ENCODE measurements at regions of chr15 and their contacts with region 1.

Region 1: GRCh38 chr15:44426975-44427755 is at the start of gene CTDSPL2:
- DNase-seq: peak; percentile 87
- ATAC-seq: peak; percentile 97
- H3K4me3 Mint-ChIP-seq: peak within 1 kb of the TSS; percentile 100
- H3K27ac Mint-ChIP-seq: peak within 1 kb of the TSS; percentile 99
- H3K4me1 Mint-ChIP-seq: peaks cover 41% of the 10 kb centered on the region
- H3K27me3 Mint-ChIP-seq: no peaks in the 10 kb centered on the region
- CTCF ChIP-seq: no peak
- total RNA-seq, gene CTDSPL2: 44.6 and 46.8 TPM in 2 replicates

Region 2: DNA sequence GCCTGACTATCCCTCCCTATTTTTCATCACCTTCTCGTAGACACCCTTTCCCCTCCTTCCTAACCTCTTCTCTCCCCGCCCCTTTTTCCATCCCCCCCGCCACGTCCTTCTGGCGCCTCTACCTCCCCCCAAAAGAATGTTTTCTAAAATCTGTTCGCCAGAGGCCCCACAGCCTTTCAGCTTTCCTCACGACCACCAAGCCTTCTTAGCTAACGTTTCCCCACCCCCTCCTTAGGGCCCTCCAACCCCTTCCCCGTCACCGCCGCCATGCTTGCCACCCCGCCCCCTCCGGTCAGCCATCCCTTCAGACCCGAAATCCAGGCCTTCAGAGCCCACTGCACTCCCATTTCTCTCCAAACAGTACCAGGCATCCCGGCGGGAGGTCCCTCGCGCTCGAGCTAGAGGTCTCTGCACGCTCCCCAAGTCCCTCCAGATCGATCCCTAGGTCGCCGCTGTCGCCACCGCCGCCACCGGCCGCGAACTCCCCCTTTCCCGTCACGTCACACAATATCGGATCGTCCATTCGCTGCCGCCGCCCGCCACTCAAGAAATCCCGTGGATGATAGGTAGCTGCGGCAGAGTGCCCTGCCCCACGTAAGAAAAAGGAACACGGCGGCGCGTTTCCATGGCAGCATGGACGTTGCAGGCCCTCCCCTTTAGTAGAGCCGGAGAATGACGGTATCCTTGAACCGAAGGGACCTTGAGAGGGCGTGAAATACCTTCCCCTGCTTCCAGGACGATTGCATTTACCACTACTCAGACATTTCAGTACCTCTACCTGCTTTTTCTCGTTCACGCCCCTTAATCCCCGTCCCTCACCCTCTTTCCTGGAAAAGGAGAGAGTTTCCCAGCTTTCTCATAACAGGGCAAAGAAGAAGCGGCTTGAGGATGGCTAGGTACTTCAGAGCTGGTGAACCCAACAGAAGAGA is 934.2 kb before region 1 on chr15 and contains the start of gene TP53BP1:
- CTCF ChIA-PET with region 1: no interaction called
- POLR2A ChIA-PET with region 1: no interaction called
- intact Hi-C with region 1: loop called (anchors 5 kb)
- DNase-seq: peak; percentile 87
- ATAC-seq: peak; percentile 99
- H3K4me3 Mint-ChIP-seq: peak within 1 kb of the TSS; percentile 98
- H3K27ac Mint-ChIP-seq: peak within 1 kb of the TSS; percentile 95
- H3K4me1 Mint-ChIP-seq: peaks cover 19% of the 10 kb centered on the region
- H3K27me3 Mint-ChIP-seq: no peaks in the 10 kb centered on the region
- CTCF ChIP-seq: no peak
- total RNA-seq, gene TP53BP1: 53.9 and 54.6 TPM in 2 replicates

Region 3: GRCh38 chr15:44286814-44287452 is 140.2 kb before region 1 on chr15:
- CTCF ChIA-PET with region 1: interaction called, 3 read pairs
- POLR2A ChIA-PET with region 1: interaction called, 32 read pairs
- intact Hi-C with region 1: loop called (anchors 1 kb)
- DNase-seq: no peak
- ATAC-seq: no peak
- H3K4me3 Mint-ChIP-seq: peak overlapping the region; percentile 90
- H3K27ac Mint-ChIP-seq: peak overlapping the region; percentile 99
- H3K4me1 Mint-ChIP-seq: peaks cover 42% of the 10 kb centered on the region
- H3K27me3 Mint-ChIP-seq: peaks cover 3% of the 10 kb centered on the region
- CTCF ChIP-seq: no peak

Region 4: GRCh38 chr15:44296625-44297524 is 130.3 kb before region 1 on chr15:
- CTCF ChIA-PET with region 1: no interaction called
- POLR2A ChIA-PET with region 1: no interaction called
- intact Hi-C with region 1: loop called (anchors 2 kb)
- DNase-seq: no peak
- ATAC-seq: peak; percentile 61
- H3K4me3 Mint-ChIP-seq: no peak overlapping the region
- H3K27ac Mint-ChIP-seq: peak overlapping the region; percentile 77
- H3K4me1 Mint-ChIP-seq: peaks cover 58% of the 10 kb centered on the region
- H3K27me3 Mint-ChIP-seq: no peaks in the 10 kb centered on the region
- CTCF ChIP-seq: no peak

Region 5: GRCh38 chr15:44468713-44469385 is 41.7 kb after region 1 on chr15:
- CTCF ChIA-PET with region 1: no interaction called
- POLR2A ChIA-PET with region 1: no interaction called
- intact Hi-C with region 1: loop called (anchors 5 kb)
- DNase-seq: no peak
- ATAC-seq: no peak
- H3K4me3 Mint-ChIP-seq: no peak overlapping the region
- H3K27ac Mint-ChIP-seq: no peak overlapping the region
- H3K4me1 Mint-ChIP-seq: peaks cover 12% of the 10 kb centered on the region
- H3K27me3 Mint-ChIP-seq: no peaks in the 10 kb centered on the region
- CTCF ChIP-seq: no peak

Region 6: GRCh38 chr15:44536962-44537734 is 110.0 kb after region 1 on chr15 and contains the start of gene EIF3J:
- CTCF ChIA-PET with region 1: no interaction called
- POLR2A ChIA-PET with region 1: interaction called, 9 read pairs
- intact Hi-C with region 1: loop called (anchors 2 kb)
- DNase-seq: peak; percentile 90
- ATAC-seq: peak; percentile 89
- H3K4me3 Mint-ChIP-seq: peak within 1 kb of the TSS; percentile 92
- H3K27ac Mint-ChIP-seq: peak within 1 kb of the TSS; percentile 93
- H3K4me1 Mint-ChIP-seq: peaks cover 50% of the 10 kb centered on the region
- H3K27me3 Mint-ChIP-seq: no peaks in the 10 kb centered on the region
- CTCF ChIP-seq: no peak
- total RNA-seq, gene EIF3J: 78.9 and 88.4 TPM in 2 replicates

Region 7: DNA sequence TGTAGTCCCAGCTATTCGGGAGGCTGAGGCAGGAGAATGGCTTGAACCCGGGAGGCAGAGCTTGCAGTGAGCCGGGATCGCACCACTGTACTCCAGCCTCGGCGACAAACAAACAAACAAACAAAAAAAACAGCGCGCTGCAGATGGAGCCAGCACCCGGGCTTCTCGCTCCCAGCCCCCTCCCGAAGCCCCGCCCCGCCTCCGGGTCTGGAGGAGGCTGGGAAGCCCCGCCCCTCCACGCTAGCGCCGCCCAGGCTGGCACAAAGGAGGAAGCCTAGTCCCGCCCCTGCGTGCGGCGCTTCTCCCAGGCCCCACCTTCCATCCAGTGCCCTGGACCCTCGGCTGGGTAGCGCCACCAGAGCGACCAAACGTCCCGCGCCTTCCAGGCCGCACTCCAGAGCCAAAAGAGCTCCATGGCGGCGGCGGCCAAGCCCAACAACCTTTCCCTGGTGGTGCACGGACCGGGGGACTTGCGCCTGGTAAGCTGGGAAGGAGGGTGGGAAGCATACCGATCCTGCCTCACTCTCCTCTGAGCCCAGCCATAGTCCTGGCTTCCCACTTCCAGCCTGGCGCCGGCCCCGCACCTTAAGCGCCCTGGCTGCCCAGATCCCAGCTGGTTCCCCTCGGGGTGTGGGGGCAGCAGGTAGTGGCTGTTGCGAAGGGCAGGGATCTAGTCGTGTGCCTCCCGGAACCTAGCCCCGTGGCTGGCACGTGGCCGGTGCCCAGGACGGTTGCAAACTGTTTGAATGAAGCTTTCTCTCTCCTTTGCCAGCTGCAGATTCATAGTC is 595.9 kb after region 1 on chr15 and contains the start of gene SORD:
- CTCF ChIA-PET with region 1: no interaction called
- POLR2A ChIA-PET with region 1: no interaction called
- intact Hi-C with region 1: loop called (anchors 5 kb)
- DNase-seq: peak; percentile 91
- ATAC-seq: peak; percentile 100
- H3K4me3 Mint-ChIP-seq: peak within 1 kb of the TSS; percentile 89
- H3K27ac Mint-ChIP-seq: no peak within 1 kb of the TSS
- H3K4me1 Mint-ChIP-seq: peaks cover 27% of the 10 kb centered on the region
- H3K27me3 Mint-ChIP-seq: peaks cover 15% of the 10 kb centered on the region
- CTCF ChIP-seq: no peak
- total RNA-seq, gene SORD: 15.1 and 15.5 TPM in 2 replicates